Activated CD8-positive, alpha-beta memory T cell treated with anti-CD3 and anti-CD28 coated beads, Interleukin-2, amount 10 ng/mL, durations not matched to agents 7 days and 5 days (primary cell): ENCODE measurements at regions of chr7 and their contacts with region 1.

Region 1: GRCh38 chr7:5375925-5376324 is 47.7 kb downstream of the TNRC18 start:
- DNase-seq: peak; percentile 72
- ATAC-seq: peak; percentile 76
- H3K4me3 Mint-ChIP-seq: no peak overlapping the region
- H3K27ac Mint-ChIP-seq: peak overlapping the region; percentile 80
- H3K4me1 Mint-ChIP-seq: peaks cover 18% of the 10 kb centered on the region
- H3K27me3 Mint-ChIP-seq: no peaks in the 10 kb centered on the region

Region 2: GRCh38 chr7:4895766-4896165 is 480.2 kb before region 1 on chr7:
- CTCF ChIA-PET with region 1: no interaction called
- DNase-seq: no peak
- ATAC-seq: no peak
- H3K4me3 Mint-ChIP-seq: no peak overlapping the region
- H3K27ac Mint-ChIP-seq: no peak overlapping the region
- H3K4me1 Mint-ChIP-seq: no peaks in the 10 kb centered on the region
- H3K27me3 Mint-ChIP-seq: no peaks in the 10 kb centered on the region

Region 3: GRCh38 chr7:5139998-5140397 is 235.9 kb before region 1 on chr7:
- CTCF ChIA-PET with region 1: no interaction called
- DNase-seq: peak; percentile 42
- ATAC-seq: no peak
- H3K4me3 Mint-ChIP-seq: no peak overlapping the region
- H3K27ac Mint-ChIP-seq: no peak overlapping the region
- H3K4me1 Mint-ChIP-seq: peaks cover 13% of the 10 kb centered on the region
- H3K27me3 Mint-ChIP-seq: peaks cover 12% of the 10 kb centered on the region

Region 4: GRCh38 chr7:5363729-5364128 is 12.2 kb before region 1 on chr7:
- CTCF ChIA-PET with region 1: interaction called, 14 read pairs
- DNase-seq: peak; percentile 56
- ATAC-seq: peak; percentile 66
- H3K4me3 Mint-ChIP-seq: no peak overlapping the region
- H3K27ac Mint-ChIP-seq: peak overlapping the region; percentile 45
- H3K4me1 Mint-ChIP-seq: peaks cover 27% of the 10 kb centered on the region
- H3K27me3 Mint-ChIP-seq: no peaks in the 10 kb centered on the region

Region 5: DNA sequence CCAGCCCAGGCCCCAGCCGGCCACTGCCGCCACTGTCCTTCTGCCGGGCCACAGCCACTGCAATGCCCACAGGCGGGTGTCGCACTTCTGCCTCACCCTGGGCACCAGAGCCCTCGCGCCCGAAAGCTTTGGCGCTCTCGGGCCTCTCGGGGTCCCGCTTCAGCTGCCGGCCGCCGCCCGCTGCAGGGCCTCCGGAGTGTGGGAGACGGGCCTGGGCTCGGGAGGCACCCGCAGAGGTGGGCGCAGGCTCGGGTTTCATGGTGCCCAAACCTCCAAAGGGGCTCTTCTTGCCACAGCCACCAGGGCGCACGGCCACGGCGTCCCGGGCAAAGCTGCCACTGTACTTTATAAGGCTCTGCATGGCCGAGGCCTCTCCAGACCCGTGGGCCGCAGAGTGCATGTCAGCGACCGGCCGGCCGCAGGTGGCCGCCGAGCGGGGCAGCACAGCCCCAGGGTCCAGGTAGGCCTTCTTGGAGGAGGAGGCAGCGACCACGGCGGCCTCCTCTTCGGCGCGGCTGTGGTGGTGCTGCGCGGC is 11.9 kb after region 1 on chr7:
- CTCF ChIA-PET with region 1: no interaction called
- DNase-seq: no peak
- ATAC-seq: no peak
- H3K4me3 Mint-ChIP-seq: no peak overlapping the region
- H3K27ac Mint-ChIP-seq: no peak overlapping the region
- H3K4me1 Mint-ChIP-seq: peaks cover 11% of the 10 kb centered on the region
- H3K27me3 Mint-ChIP-seq: no peaks in the 10 kb centered on the region